ENCODE measurements at regions of chr1 and their contacts with region 1.

Region 1: GRCh38 chr1:183306317-183307042 is 111.7 kb downstream of the NMNAT2 start:
- DNase-seq: no peak
- ATAC-seq: no peak
- H3K4me3 ChIP-seq: no peak overlapping the region
- H3K27ac ChIP-seq: no peak overlapping the region
- H3K4me1 ChIP-seq: no peaks in the 10 kb centered on the region
- H3K27me3 ChIP-seq: no peaks in the 10 kb centered on the region
- CTCF ChIP-seq: peak; percentile 55

Region 2: DNA sequence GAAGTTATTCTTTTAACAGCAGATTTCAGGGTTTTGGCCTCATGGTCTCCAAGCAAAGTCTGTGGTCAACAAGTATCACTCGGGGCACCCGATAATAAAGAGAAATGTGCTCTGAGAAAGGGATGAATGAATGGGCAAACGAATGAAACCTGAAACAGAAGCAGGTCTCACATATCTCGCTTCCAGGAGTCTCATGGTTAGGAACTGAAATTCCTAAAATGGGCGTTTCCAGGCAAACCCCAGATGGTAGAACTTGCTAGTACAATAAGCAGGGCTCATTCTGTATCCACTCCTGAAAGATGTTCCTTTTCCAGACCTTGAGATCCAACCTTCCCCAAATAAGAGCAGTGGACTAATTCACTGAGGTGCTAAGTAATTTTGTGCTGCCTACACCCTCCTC is 33.2 kb before region 1 on chr1:
- CTCF ChIA-PET with region 1: interaction called, 18 read pairs
- POLR2A ChIA-PET with region 1: no interaction called
- in situ Hi-C with region 1: no loop called
- intact Hi-C with region 1: no loop called
- DNase-seq: no peak
- ATAC-seq: no peak
- H3K4me3 ChIP-seq: no peak overlapping the region
- H3K27ac ChIP-seq: no peak overlapping the region
- H3K4me1 ChIP-seq: peaks cover 11% of the 10 kb centered on the region
- H3K27me3 ChIP-seq: no peaks in the 10 kb centered on the region
- CTCF ChIP-seq: no peak

Region 3: DNA sequence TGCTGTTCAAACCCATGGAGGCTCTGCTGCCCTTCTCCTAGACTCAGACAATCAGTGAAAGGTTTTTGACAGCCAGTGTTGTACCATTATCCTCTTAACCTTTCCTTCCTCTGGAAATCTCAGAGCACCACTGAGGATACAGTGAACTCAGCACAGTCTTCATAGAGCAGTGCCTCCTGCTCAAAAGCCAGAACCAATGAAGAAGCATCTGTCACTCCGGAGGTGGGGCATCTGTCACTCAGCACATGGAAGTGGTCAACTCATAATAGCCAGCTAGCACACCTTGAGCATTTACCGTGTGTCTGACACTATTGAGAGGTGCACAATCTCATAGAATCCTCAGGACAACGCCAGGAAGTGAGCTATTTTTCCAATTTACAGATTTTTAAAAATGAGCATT is 49.3 kb after region 1 on chr1:
- CTCF ChIA-PET with region 1: no interaction called
- POLR2A ChIA-PET with region 1: no interaction called
- in situ Hi-C with region 1: no loop called
- intact Hi-C with region 1: no loop called
- DNase-seq: no peak
- ATAC-seq: no peak
- H3K4me3 ChIP-seq: no peak overlapping the region
- H3K27ac ChIP-seq: no peak overlapping the region
- H3K4me1 ChIP-seq: no peaks in the 10 kb centered on the region
- H3K27me3 ChIP-seq: peaks cover 5% of the 10 kb centered on the region; the same call in 1 of the 2 replicates
- CTCF ChIP-seq: no peak